Dorsolateral prefrontal cortex (tissue), 120 donors: ENCODE measurements at regions of chr14 and their contacts with region 1.

Region 1: DNA sequence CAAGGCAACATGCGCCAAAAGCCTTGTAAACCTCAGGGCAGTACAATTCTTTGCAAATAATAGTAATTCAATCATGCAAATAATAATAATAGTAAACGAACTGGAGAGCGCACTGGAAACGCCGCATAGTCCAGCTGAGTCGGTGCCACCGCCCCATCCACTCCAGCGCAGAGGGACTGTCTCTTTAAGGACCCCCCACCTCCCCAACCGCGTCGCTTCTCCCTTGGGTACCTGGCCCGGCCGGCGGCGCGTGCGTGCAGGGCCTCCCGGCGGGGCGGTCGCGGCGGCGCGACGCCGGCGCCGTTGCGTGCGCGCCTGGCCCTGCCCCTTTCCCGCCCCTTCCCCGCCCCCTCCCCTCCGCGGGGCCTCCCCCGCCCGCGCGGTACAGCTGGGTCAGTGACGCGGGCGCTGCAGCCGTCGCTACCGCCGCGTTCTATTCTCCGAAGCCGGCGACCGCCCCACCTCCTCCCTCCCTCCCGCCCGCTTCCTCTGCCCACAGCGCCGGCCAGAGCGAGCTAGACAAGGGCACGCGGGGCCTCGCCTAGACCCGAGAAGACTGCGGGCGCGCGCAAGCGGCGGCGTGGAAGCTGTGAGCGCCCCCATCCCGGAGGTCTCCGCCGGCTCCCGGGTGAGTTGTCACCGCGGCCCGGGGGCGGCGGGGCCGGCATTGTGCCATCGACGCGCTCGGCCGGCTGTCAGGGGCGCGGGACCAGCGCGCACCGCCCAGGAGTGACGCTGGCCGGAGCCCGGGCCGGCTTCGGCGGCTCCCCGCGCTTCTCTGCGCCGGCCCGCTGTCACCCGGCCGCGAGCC is at the start of gene SUSD6:
- DNase-seq: peak; percentile 86 to 92 (median 90)
- H3K4me3 ChIP-seq: peak within 1 kb of the TSS; percentile 62 to 92 (median 81)
- H3K27ac ChIP-seq: peak within 1 kb of the TSS; percentile 74 to 98 (median 93)
- H3K27me3 ChIP-seq: no peaks in the 10 kb centered on the region
- CTCF ChIP-seq: peak in 8 of 56 donors; percentile 8 to 18 (median 14)
- total RNA-seq, gene SUSD6: 25.2 to 57.8 (median 35.8) TPM

Region 2: GRCh38 chr14:69574263-69574953 is 37.0 kb before region 1 on chr14 and contains the start of gene CCDC177:
- intact Hi-C with region 1: no loop called
- DNase-seq: peak in 9 of 10 donors; percentile 45 to 86 (median 69)
- H3K4me3 ChIP-seq: peak within 1 kb of the TSS; percentile 30 to 72 (median 60)
- H3K27ac ChIP-seq: peak within 1 kb of the TSS in 53 of 59 donors; percentile 26 to 92 (median 74)
- H3K27me3 ChIP-seq: peaks cover 0 to 30% (median 2%) of the 10 kb centered on the region in 45 donors
- CTCF ChIP-seq: peak; percentile 64 to 86 (median 78)
- total RNA-seq, gene CCDC177: 2.8 to 14.6 (median 10.0) TPM

Region 3: DNA sequence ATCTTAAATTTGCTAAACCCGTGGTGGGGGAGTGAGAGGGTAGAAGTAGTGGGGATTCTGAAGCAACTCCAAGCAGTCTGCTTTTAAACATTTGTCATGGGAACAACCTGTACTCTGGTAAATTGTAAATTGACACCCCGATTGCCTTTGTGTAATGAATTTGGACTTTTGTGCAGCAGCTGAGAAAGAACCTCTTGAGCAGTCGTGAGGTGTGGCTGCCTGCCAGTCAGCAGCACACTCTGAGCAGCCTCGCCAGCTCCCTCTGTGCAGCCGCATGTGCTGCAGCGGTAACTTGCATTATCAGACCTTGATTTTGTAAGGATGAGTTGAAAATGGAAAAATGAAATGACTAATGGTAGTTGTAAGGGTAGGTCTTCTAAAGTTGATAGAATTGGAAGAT is 74.3 kb after region 1 on chr14:
- intact Hi-C with region 1: loop called (anchors 5 kb)
- DNase-seq: peak; percentile 57 to 84 (median 70)
- H3K4me3 ChIP-seq: peak overlapping the region in 3 of 59 donors; percentile 9 to 23 (median 14)
- H3K27ac ChIP-seq: peak overlapping the region in 42 of 59 donors; percentile 1 to 94 (median 45)
- H3K27me3 ChIP-seq: no peaks in the 10 kb centered on the region
- CTCF ChIP-seq: peak in 1 of 56 donors; percentile 21

Region 4: GRCh38 chr14:69708586-69709174 is 97.3 kb after region 1 on chr14:
- intact Hi-C with region 1: loop called (anchors 5 kb)
- DNase-seq: peak in 8 of 10 donors; percentile 33 to 68 (median 64)
- H3K4me3 ChIP-seq: no peak overlapping the region
- H3K27ac ChIP-seq: peak overlapping the region in 55 of 59 donors; percentile 4 to 88 (median 67)
- H3K27me3 ChIP-seq: no peaks in the 10 kb centered on the region
- CTCF ChIP-seq: peak in 44 of 56 donors; percentile 18 to 65 (median 42)

Region 5: DNA sequence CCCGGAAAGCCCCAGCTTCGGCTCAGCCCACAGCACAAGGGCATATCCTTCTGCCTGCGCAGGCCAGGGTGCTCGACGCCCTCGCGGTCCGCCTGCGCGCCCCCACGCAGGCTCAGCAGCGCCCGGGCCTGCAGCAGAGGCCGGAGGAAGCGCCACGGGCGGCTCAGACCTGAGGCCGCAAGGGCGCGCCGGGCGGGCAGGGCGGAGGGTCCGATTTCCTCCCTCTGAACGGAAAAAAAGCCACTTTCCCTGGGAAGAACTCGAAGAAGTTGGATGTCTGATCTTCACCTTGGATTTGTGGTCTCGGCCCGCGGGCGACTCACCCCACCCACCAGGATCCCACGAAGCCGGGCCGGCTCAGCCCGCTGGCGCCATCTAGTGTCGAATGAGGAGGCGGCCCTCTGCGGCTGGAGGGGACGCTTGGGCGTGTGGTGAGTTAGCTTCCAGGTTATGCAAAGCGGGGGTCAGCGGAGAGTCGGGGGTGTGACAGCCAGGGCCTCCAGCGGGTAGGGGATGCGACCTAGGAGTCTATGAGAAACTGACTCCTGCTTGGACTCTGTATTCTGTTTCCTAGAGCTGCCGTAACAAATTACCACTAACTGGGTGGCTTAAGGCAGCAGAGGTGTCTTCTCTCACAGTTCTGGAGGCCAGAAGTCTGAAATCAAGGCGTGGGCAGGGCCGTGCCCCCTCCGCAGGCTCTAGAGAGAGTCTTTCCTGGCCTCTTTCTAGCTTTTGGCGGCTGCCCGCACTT is 115.5 kb after region 1 on chr14:
- intact Hi-C with region 1: loop called in 1 of 2 experiments (anchors 5 kb)
- DNase-seq: peak; percentile 65 to 90 (median 77)
- H3K4me3 ChIP-seq: peak overlapping the region; percentile 27 to 73 (median 59)
- H3K27ac ChIP-seq: peak overlapping the region in 33 of 59 donors; percentile 0 to 87 (median 46)
- H3K27me3 ChIP-seq: no peaks in the 10 kb centered on the region
- CTCF ChIP-seq: peak; percentile 77 to 100 (median 98)

Region 6: DNA sequence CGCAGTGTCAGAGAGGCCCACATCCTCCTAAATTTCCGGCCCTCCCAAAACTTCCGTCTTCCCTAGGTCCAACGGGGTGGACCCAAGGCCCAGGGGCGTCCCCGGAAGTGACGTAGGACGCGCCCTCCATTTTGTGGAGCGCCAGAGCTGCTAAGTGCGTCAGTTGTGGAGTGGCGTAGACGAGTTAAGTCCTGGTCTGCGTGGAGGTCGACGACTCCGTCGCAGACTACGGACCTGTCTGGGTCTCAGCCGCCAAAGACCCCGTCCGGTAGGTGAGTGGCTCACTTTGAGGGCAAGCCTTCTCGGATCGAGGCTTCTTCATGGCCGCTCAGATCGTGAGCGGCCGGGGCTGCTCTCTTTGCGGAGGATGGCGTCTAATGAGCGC is 155.6 kb after region 1 on chr14 and contains the start of gene SRSF5:
- intact Hi-C with region 1: loop called (anchors 5 kb)
- DNase-seq: peak; percentile 95 to 98 (median 97)
- H3K4me3 ChIP-seq: peak within 1 kb of the TSS; percentile 75 to 100 (median 92)
- H3K27ac ChIP-seq: peak within 1 kb of the TSS; percentile 93 to 100 (median 100)
- H3K27me3 ChIP-seq: no peaks in the 10 kb centered on the region
- CTCF ChIP-seq: peak in 5 of 56 donors; percentile 8 to 22 (median 17)
- total RNA-seq, gene SRSF5: 348 to 822 (median 535) TPM